Activated CD8-positive, alpha-beta T cell treated with anti-CD3 and anti-CD28 coated beads, Interleukin-2, amount 10 ng/mL, durations not matched to agents 7 days and 5 days (primary cell): ENCODE measurements at regions of chr3 and their contacts with region 1.

Region 1: GRCh38 chr3:42880601-42881451 is 5.1 kb upstream of the CYP8B1 start:
- DNase-seq: peak; percentile 95
- ATAC-seq: peak; percentile 99
- H3K4me3 Mint-ChIP-seq: peak overlapping the region; percentile 79
- H3K27ac Mint-ChIP-seq: peak overlapping the region; percentile 93
- H3K4me1 Mint-ChIP-seq: peaks cover 15% of the 10 kb centered on the region
- H3K27me3 Mint-ChIP-seq: peaks cover 12% of the 10 kb centered on the region

Region 2: GRCh38 chr3:42831321-42831713 is 49.5 kb before region 1 on chr3:
- CTCF ChIA-PET with region 1: interaction called, 39 read pairs
- POLR2A ChIA-PET with region 1: no interaction called
- DNase-seq: peak; percentile 89
- ATAC-seq: peak; percentile 83
- H3K4me3 Mint-ChIP-seq: no peak overlapping the region
- H3K27ac Mint-ChIP-seq: no peak overlapping the region
- H3K4me1 Mint-ChIP-seq: peaks cover 13% of the 10 kb centered on the region
- H3K27me3 Mint-ChIP-seq: peaks cover 19% of the 10 kb centered on the region